ENCODE measurements at regions of chr1 and their contacts with region 1.

Region 1: DNA sequence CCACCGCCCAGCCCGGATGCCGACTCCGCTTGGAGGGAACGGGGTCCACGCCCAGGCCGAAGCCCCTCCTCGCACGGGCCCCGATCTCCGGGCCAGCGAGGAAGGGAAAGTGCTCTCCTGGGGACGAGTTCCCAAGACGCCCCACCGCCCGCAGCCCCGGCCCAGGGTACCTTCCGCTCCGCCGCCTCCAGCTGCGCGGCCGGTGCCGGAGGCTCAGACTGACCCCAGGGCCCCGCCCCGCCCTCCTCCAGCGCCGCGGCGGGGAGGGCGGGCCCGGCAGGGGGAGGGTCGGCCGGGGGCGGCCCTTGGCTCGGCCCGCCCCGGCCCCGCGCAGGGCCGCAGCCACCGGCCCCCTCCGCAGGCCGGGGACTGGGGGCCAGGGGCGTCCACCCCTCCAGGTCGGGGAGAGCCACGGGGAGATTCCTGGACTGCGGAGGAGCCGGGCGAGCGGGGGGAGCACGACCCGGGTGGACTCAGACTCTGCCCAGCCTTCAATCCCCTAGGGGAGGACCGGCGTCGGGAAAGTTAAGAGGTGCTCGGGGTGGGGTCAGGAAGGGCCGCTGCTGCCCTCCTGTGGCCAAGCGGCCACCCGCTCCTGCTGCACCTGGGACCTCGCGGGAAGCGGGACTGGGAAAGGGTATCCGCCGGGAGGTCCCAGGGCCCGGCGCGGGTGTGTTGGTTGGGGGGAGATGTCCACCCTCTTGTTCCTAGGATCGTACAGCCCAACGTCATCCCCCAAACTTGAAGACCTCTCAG is at the start of gene RHOC:
- DNase-seq: peak; percentile 70 to 86
- ATAC-seq: peak; percentile 83 to 86
- H3K4me3 ChIP-seq: peak within 1 kb of the TSS; percentile 82 to 87 (median 84)
- H3K27ac ChIP-seq: peak within 1 kb of the TSS; percentile 85 to 94 (median 90)
- H3K4me1 ChIP-seq: peaks cover 16 to 17% of the 10 kb centered on the region in 2 donors
- H3K27me3 ChIP-seq: no peaks in the 10 kb centered on the region
- CTCF ChIP-seq: peak; percentile 87 to 97 (median 95)
- POLR2A ChIP-seq: peak; percentile 85 to 87
- total RNA-seq, gene RHOC: 33.1 to 86.5 (median 64.3) TPM

Region 2: DNA sequence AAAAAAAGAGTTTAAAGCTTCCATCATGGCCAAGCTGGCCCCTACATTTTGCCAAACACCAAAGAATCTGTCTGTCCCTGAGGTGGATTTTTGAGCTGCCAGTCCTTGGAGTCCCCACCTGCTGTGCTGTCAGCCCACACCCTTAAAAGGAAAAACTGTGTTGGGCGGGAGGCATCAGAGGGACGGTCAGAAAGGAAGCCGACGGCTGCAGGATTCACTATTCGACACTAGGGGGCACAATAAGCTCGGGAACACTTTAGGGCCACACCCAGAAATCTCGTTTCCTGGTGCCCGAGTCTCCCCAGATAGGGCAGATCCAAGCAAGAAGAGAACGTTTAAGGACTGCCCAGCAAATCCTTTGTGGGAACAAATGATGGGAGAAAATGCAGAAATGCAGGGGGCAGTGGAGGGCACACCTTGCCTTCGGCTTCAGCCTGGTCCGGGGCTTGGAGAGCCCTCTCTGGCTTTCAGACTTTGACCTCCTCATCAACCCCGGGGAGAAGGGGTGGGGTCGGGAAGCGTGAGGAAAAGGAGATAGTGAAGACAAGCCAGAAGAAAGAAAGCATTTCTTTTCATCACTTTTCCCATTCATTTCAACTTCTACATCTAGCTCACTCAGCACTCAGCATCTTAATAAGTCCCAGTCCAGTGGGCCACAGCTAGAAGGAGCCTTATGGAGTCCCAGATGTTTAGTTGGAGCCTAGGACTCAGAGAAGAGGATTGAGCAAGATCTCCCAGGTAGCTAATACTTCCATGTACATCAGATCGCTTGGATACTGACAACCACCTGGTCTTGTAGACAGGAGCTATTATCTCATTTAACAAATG is 316.1 kb before region 1 on chr1:
- in situ Hi-C with region 1: loop called (anchors 5 to 25 kb)
- intact Hi-C with region 1: loop called (anchors 2 kb)
- DNase-seq: peak; percentile 70 to 84
- ATAC-seq: peak; percentile 92
- H3K4me3 ChIP-seq: peak overlapping the region; percentile 39 to 64 (median 49)
- H3K27ac ChIP-seq: peak overlapping the region; percentile 58 to 91 (median 80)
- H3K4me1 ChIP-seq: peaks cover 20% of the 10 kb centered on the region in 2 donors
- H3K27me3 ChIP-seq: no peaks in the 10 kb centered on the region
- CTCF ChIP-seq: peak; percentile 88 to 93 (median 91)
- POLR2A ChIP-seq: peak in 1 of 2 donors; percentile 22

Region 3: GRCh38 chr1:112501810-112502641 is 205.1 kb before region 1 on chr1:
- in situ Hi-C with region 1: no loop called
- intact Hi-C with region 1: loop called (anchors 2 kb)
- DNase-seq: peak in 1 of 2 donors; percentile 33
- ATAC-seq: peak in 1 of 2 donors; percentile 75
- H3K4me3 ChIP-seq: peak overlapping the region; percentile 56 to 80 (median 57)
- H3K27ac ChIP-seq: no peak overlapping the region
- H3K4me1 ChIP-seq: peaks cover 4 to 8% of the 10 kb centered on the region in 2 donors
- H3K27me3 ChIP-seq: peaks cover 0 to 17% (median 14%) of the 10 kb centered on the region in 3 donors
- CTCF ChIP-seq: peak in 4 of 5 experiments; percentile 35 to 68 (median 46)
- POLR2A ChIP-seq: no peak

Region 4: GRCh38 chr1:113389953-113390834 is 683.1 kb after region 1 on chr1 and contains the start of gene MAGI3:
- in situ Hi-C with region 1: loop called in 1 of 4 experiments (anchors 25 kb)
- intact Hi-C with region 1: no loop called
- DNase-seq: peak; percentile 93 to 94
- ATAC-seq: peak; percentile 88 to 90
- H3K4me3 ChIP-seq: peak within 1 kb of the TSS; percentile 79 to 96 (median 90)
- H3K27ac ChIP-seq: peak within 1 kb of the TSS; percentile 77 to 86 (median 82)
- H3K4me1 ChIP-seq: peaks cover 20 to 24% of the 10 kb centered on the region in 2 donors
- H3K27me3 ChIP-seq: no peaks in the 10 kb centered on the region
- CTCF ChIP-seq: no peak
- POLR2A ChIP-seq: peak; percentile 62 to 76
- total RNA-seq, gene MAGI3: 2.8 to 4.1 (median 4.0) TPM